ENCODE measurements at regions of chr7 and their contacts with region 1.

Region 1: DNA sequence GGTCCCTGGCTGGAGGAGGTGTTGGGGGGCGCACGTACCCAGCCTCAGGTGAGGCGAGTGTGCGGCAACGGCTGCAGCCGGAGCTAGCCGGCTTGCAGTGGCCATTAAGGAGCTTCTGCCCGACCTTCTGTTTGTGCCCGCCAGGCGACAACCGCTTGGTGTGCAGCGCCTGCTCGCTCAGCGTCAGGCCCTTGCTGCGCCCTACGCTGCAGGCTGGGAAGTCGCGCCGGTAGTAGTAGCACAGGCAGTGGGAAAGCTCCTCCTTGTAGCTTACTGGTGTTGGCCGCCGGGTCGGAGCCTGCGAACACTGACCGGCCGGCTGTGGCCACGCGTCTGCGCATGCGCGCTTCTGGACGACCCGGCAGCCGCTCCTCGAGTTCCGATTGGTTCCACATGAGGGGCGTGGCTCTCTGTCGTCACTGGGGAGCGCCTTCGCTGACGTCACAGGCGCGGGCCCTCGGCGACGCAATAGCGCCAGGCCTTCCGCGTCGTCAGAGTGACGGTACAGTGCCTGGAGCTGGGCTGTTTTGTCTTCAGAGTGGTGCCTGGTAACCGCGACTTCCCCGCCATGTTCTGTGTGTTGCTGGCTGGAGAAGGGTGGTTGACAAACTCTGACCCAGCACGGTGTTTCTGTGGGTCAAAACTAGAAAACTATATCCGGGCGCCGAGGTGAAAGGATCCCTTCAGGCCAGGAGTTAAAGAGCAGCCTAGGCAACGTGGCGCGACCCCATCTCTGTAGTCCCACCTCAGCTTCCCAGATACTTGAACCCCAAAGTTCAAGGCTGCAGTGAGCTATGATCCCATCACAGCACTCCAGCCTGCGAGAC is 76.3 kb upstream of the TMEM248 start:
- DNase-seq: peak; percentile 99
- H3K4me3 Mint-ChIP-seq: peak overlapping the region; percentile 97
- H3K27ac Mint-ChIP-seq: peak overlapping the region; percentile 99
- H3K4me1 Mint-ChIP-seq: peaks cover 20% of the 10 kb centered on the region
- H3K27me3 Mint-ChIP-seq: no peaks in the 10 kb centered on the region

Region 2: GRCh38 chr7:66493235-66494181 is 351.3 kb before region 1 on chr7:
- intact Hi-C with region 1: loop called (anchors 1 kb)
- DNase-seq: peak; percentile 95
- H3K4me3 Mint-ChIP-seq: peak overlapping the region; percentile 86
- H3K27ac Mint-ChIP-seq: peak overlapping the region; percentile 93
- H3K4me1 Mint-ChIP-seq: peaks cover 10% of the 10 kb centered on the region
- H3K27me3 Mint-ChIP-seq: no peaks in the 10 kb centered on the region

Region 3: DNA sequence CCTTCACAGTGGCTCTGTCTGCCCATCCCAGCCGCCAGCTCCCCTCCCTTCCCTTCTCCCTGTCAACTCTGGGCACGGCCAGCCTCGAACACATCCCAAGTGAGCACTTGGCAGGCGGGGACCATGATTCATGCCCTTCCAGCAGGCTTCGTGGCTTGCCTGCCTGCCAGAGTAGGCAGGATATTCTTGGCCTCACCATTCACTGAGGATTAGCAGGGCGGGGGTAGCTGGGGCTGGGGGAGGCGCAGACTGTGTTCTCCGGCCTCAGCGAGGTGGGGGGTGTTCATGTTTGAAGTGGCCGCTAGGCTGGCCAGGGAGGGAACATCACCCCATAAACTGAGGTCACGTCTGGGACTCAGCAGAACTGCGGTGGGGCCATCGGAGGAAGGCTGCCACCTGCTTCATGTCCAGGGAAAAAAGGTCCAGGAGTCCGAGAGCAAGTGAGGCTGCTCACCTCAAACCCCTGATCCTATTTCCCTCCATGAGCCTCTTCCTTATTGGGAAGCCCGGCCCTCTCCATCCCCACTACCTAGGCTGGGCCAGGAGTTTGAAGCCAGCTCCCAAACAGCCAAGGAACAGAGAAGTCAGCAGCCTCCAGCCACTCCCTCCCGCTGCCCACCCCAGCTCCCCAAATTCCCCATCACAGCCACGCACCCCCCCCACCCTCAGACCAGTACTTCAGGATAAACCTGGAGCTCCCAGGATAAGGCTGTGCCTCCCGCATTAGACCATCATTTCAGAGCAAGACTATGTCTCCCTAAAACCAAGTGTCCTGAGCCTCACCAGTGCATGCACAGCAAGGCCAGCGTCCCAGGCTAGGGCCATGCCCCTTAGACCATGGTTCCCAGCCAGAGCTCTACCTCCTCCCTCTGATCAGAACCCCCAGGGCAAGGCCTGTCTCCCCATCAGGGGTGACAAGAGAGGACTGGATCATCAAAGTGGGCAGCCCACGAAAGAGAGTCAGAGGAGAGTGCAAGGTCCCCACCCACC is 147.0 kb before region 1 on chr7:
- intact Hi-C with region 1: no loop called
- DNase-seq: no peak
- H3K4me3 Mint-ChIP-seq: no peak overlapping the region
- H3K27ac Mint-ChIP-seq: no peak overlapping the region
- H3K4me1 Mint-ChIP-seq: no peaks in the 10 kb centered on the region
- H3K27me3 Mint-ChIP-seq: no peaks in the 10 kb centered on the region

Region 4: GRCh38 chr7:66740302-66740979 is 104.3 kb before region 1 on chr7 and contains the start of gene RABGEF1:
- intact Hi-C with region 1: loop called (anchors 1 kb)
- DNase-seq: peak; percentile 95
- H3K4me3 Mint-ChIP-seq: peak within 1 kb of the TSS; percentile 94
- H3K27ac Mint-ChIP-seq: peak within 1 kb of the TSS; percentile 94
- H3K4me1 Mint-ChIP-seq: peaks cover 14% of the 10 kb centered on the region
- H3K27me3 Mint-ChIP-seq: no peaks in the 10 kb centered on the region
- total RNA-seq, gene RABGEF1: 24.5 and 26.3 TPM in 2 replicates

Region 5: GRCh38 chr7:66869660-66870450 is 25.1 kb after region 1 on chr7:
- intact Hi-C with region 1: loop called (anchors 2 kb)
- DNase-seq: no peak
- H3K4me3 Mint-ChIP-seq: no peak overlapping the region
- H3K27ac Mint-ChIP-seq: peak overlapping the region; percentile 67
- H3K4me1 Mint-ChIP-seq: peaks cover 8% of the 10 kb centered on the region
- H3K27me3 Mint-ChIP-seq: no peaks in the 10 kb centered on the region

Region 6: GRCh38 chr7:66920769-66921395 is 76.1 kb after region 1 on chr7 and contains the start of gene TMEM248:
- intact Hi-C with region 1: loop called (anchors 1 kb)
- DNase-seq: peak; percentile 90
- H3K4me3 Mint-ChIP-seq: peak within 1 kb of the TSS; percentile 94
- H3K27ac Mint-ChIP-seq: peak within 1 kb of the TSS; percentile 96
- H3K4me1 Mint-ChIP-seq: peaks cover 23% of the 10 kb centered on the region
- H3K27me3 Mint-ChIP-seq: no peaks in the 10 kb centered on the region
- total RNA-seq, gene TMEM248: 82.2 and 83.6 TPM in 2 replicates